ENCODE measurements at regions of chr17 and their contacts with region 1.

Region 1: DNA sequence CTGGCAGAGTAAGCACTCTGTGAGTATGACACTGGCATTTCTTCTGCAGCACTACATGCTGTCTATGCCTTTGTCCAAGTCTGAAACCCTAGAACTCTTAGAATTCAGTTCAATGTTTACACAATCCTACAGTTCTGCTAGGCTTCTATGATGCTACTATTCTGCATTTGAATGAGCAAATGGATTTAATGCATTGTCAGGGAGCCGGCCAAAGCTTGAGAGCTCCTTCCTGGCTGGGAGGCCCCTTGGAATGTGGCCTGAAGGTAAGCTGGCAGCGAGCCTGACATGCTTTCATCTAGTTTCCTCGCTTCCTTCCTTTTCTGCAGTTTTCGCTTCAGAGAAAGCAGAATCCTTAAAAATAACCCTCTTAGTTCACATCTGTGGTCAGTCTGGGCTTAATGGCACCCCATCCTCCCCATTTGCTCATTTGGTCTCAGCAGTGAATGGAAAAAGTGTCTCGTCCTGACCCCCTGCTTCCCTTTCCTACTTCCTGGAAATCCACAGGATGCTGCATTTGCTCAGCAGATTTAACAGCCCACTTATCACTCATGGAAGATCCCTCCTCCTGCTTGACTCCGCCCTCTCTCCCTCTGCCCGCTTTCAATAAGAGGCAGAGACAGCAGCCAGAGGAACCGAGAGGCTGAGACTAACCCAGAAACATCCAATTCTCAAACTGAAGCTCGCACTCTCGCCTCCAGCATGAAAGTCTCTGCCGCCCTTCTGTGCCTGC is at the start of gene CCL2:
- DNase-seq: no peak
- H3K4me3 ChIP-seq: peak within 1 kb of the TSS; percentile 38 to 42
- H3K27ac ChIP-seq: peak within 1 kb of the TSS; percentile 84
- H3K4me1 ChIP-seq: peaks cover 67% of the 10 kb centered on the region
- H3K27me3 ChIP-seq: no peaks in the 10 kb centered on the region
- CTCF ChIP-seq: no peak
- POLR2A ChIP-seq: peak in 1 of 2 donors; percentile 51
- total RNA-seq, gene CCL2: 15.2 TPM

Region 2: GRCh38 chr17:34312080-34312479 is 57.3 kb after region 1 on chr17:
- intact Hi-C with region 1: loop called (anchors 2 kb)
- DNase-seq: peak in 1 of 2 donors; percentile 79
- H3K4me3 ChIP-seq: no peak overlapping the region
- H3K27ac ChIP-seq: peak overlapping the region; percentile 12
- H3K4me1 ChIP-seq: peaks cover 54% of the 10 kb centered on the region
- H3K27me3 ChIP-seq: no peaks in the 10 kb centered on the region
- CTCF ChIP-seq: no peak
- POLR2A ChIP-seq: no peak

Measured in vagina (tissue), 2 donors.